Dendritic cell treated with granulocyte-macrophage colony-stimulating factor and Interleukin-4, amounts not matched to agents 40 ng/mL and 50 ng/mL, for 4 days (primary cell): ENCODE measurements at regions of chr12 and their contacts with region 1.

Region 1: GRCh38 chr12:9464408-9464807 is 143.3 kb downstream of the KLRB1 start:
- H3K4me3 Mint-ChIP-seq: no peak overlapping the region
- H3K27ac Mint-ChIP-seq: no peak overlapping the region
- H3K4me1 Mint-ChIP-seq: peaks cover 5% of the 10 kb centered on the region
- H3K27me3 Mint-ChIP-seq: no peaks in the 10 kb centered on the region

Region 2: GRCh38 chr12:9331218-9331626 is 133.2 kb before region 1 on chr12:
- intact Hi-C with region 1: loop called (anchors 1 kb)
- H3K4me3 Mint-ChIP-seq: no peak overlapping the region
- H3K27ac Mint-ChIP-seq: no peak overlapping the region
- H3K4me1 Mint-ChIP-seq: peaks cover 28% of the 10 kb centered on the region
- H3K27me3 Mint-ChIP-seq: peaks cover 1% of the 10 kb centered on the region

Region 3: DNA sequence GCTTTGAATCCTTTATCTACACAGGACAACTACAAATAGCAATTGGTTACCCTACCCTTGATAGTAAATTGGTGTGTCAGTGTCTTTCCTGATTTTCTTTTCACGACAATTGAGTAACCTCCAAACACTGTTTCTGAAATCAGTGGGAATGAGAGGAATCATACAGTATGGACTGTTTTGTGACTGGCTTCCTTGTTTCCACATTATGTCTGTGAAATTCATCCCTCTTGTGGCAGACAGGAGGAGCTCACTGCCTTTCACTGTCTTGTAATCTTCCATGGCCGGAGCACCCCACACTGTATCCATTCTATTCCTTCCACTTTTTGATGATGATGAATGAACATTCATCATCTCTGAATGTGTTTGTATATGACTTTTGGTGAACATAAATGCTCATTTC is 92.2 kb before region 1 on chr12:
- intact Hi-C with region 1: loop called (anchors 5 kb)
- H3K4me3 Mint-ChIP-seq: no peak overlapping the region
- H3K27ac Mint-ChIP-seq: no peak overlapping the region
- H3K4me1 Mint-ChIP-seq: peaks cover 9% of the 10 kb centered on the region
- H3K27me3 Mint-ChIP-seq: no peaks in the 10 kb centered on the region

Region 4: GRCh38 chr12:9597365-9597764 is 133.0 kb after region 1 on chr12:
- intact Hi-C with region 1: loop called (anchors 5 kb)
- H3K4me3 Mint-ChIP-seq: no peak overlapping the region
- H3K27ac Mint-ChIP-seq: no peak overlapping the region
- H3K4me1 Mint-ChIP-seq: no peaks in the 10 kb centered on the region
- H3K27me3 Mint-ChIP-seq: no peaks in the 10 kb centered on the region